GM10248 (cell line): ENCODE measurements at regions of chr10 and their contacts with region 1.

Region 1: GRCh38 chr10:36030516-36030915 is 388.4 kb upstream of the FZD8 start:
- DNase-seq: no peak
- CTCF ChIP-seq: no peak

Region 2: GRCh38 chr10:35898716-35899440 is 131.6 kb before region 1 on chr10:
- CTCF ChIA-PET with region 1: no interaction called
- POLR2A ChIA-PET with region 1: no interaction called
- DNase-seq: no peak
- CTCF ChIP-seq: no peak

Region 3: DNA sequence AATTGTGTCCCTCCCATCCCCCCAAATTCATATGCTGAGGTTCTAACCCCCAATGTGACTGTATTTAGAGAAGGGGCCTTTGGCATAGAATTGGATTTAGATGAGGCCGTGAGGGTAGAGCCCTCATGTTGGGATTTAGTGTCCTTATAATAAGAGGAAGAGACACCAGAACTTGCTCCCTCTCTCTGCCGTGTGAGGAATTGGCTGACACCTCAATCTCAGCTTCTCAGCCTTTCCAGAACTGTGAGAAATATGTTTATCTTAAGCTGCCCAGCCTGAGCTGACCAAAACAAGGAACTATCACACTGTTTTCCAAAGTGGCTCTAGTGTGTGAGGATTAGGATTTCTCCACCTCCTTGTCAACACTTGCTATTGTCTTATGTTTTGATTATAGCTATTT is 11.6 kb after region 1 on chr10:
- CTCF ChIA-PET with region 1: interaction called, 19 read pairs
- POLR2A ChIA-PET with region 1: no interaction called
- DNase-seq: no peak
- CTCF ChIP-seq: no peak